ENCODE measurements at regions of chr5 and their contacts with region 1.

Region 1: GRCh38 chr5:31232273-31232888 is 38.9 kb downstream of the CDH6 start:
- DNase-seq: peak; percentile 50
- H3K4me3 ChIP-seq: no peak overlapping the region
- CTCF ChIP-seq: peak; percentile 83

Region 2: GRCh38 chr5:30040488-30041118 is 1191.8 kb before region 1 on chr5:
- in situ Hi-C with region 1: loop called (anchors 25 kb)
- DNase-seq: peak; percentile 79
- H3K4me3 ChIP-seq: no peak overlapping the region
- CTCF ChIP-seq: peak; percentile 91